CD4-positive, alpha-beta T cell (primary cell): ENCODE measurements at regions of chr4 and their contacts with region 1.

Region 1: DNA sequence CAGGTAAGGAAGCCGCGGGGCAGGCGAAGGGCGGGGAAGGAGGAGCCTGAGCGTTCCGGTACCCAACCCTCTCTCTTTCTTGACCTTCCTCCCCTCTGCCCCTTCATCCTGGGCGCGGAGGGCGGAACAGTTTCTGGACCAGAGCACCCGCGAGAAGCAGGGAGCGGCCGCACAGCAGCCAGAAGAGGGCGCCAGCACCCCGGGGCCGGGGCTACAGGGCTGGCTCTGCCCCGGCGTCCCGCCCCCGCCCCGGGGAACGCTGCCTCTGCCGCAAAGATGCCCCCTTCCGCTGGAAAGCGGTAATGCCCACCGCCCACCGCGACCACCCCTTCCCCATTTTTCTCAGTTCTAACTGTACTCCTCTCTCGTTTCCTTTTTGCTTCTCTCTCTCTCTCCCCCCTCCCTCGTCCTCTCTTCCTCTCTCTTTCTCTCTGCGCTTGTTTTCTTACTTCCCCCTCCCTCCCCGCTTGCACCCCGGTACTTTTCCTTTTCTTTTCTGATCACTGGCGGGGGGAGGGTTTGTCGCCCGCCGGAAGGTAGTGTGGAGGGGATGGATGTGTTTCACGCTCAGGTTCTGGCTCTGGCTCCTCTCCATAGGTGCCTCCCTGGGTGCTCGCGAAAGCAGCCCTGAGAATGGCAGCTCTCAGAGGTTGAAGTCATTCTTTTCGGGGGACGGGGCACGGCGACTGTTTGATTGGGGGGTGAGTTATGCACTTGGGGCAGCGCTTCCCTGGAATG is 13.1 kb upstream of the PRDM8 start:
- DNase-seq: peak; percentile 82 to 97 (median 92)
- ATAC-seq: peak; percentile 88
- H3K4me3 ChIP-seq: peak overlapping the region; percentile 88
- H3K4me3 Mint-ChIP-seq: peak overlapping the region; percentile 100
- H3K27ac ChIP-seq: peak overlapping the region; percentile 77 to 85
- H3K27ac Mint-ChIP-seq: peak overlapping the region; percentile 94
- H3K4me1 ChIP-seq: peaks cover 41% of the 10 kb centered on the region
- H3K4me1 Mint-ChIP-seq: peaks cover 59% of the 10 kb centered on the region
- H3K27me3 ChIP-seq: no peaks in the 10 kb centered on the region
- H3K27me3 Mint-ChIP-seq: no peaks in the 10 kb centered on the region
- CTCF ChIP-seq: peak; percentile 96

Region 2: DNA sequence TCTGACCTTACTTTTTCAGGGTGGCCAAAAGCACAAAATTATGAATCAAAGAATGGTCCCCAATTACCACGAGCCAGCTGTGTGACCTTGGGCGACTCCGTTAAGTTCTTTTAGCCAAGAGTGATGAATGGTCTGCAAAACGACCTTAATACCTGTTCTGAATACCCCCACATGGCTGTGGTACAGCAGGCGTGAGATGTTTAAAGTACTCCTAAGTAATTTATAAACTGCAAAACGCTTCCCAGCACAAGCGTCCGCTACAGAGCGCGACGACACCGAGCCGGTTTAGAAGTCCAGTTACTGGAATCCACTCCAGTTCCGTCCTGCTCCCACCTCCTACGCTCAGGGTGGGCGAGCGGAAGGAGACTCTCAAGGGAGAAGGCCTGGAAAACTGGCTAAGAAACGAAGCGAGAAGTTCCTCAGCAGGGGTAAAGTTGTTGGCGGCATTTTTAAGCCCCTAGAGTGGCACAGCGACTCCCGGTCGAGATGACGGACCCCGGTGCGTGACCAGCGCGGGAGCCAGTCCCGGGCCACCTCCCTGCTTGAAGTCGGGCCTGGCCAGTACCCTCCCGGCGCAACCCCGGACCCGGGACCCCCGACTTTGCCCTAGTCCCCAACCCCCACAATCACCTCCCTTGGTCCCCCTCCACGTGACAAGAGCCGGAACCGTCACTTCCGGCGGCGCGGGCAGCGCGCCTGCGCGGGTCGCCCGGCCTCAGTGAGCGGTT is 1408.8 kb before region 1 on chr4:
- CTCF ChIA-PET with region 1: no interaction called
- POLR2A ChIA-PET with region 1: no interaction called
- intact Hi-C with region 1: loop called in 1 of 2 experiments (anchors 10 kb)
- DNase-seq: peak; percentile 74 to 93 (median 85)
- ATAC-seq: peak; percentile 61
- H3K4me3 ChIP-seq: peak overlapping the region; percentile 94
- H3K4me3 Mint-ChIP-seq: peak overlapping the region; percentile 96
- H3K27ac ChIP-seq: peak overlapping the region; percentile 72 to 87
- H3K27ac Mint-ChIP-seq: peak overlapping the region; percentile 90
- H3K4me1 ChIP-seq: peaks cover 15% of the 10 kb centered on the region
- H3K4me1 Mint-ChIP-seq: peaks cover 20% of the 10 kb centered on the region
- H3K27me3 ChIP-seq: no peaks in the 10 kb centered on the region
- H3K27me3 Mint-ChIP-seq: no peaks in the 10 kb centered on the region
- CTCF ChIP-seq: no peak

Region 3: GRCh38 chr4:79935274-79935673 is 248.9 kb before region 1 on chr4:
- CTCF ChIA-PET with region 1: no interaction called
- POLR2A ChIA-PET with region 1: no interaction called
- intact Hi-C with region 1: no loop called
- DNase-seq: no peak
- ATAC-seq: no peak
- H3K4me3 ChIP-seq: no peak overlapping the region
- H3K4me3 Mint-ChIP-seq: no peak overlapping the region
- H3K27ac ChIP-seq: no peak overlapping the region
- H3K27ac Mint-ChIP-seq: no peak overlapping the region
- H3K4me1 ChIP-seq: no peaks in the 10 kb centered on the region
- H3K4me1 Mint-ChIP-seq: no peaks in the 10 kb centered on the region
- H3K27me3 ChIP-seq: no peaks in the 10 kb centered on the region
- H3K27me3 Mint-ChIP-seq: no peaks in the 10 kb centered on the region
- CTCF ChIP-seq: no peak

Region 4: GRCh38 chr4:80072744-80073472 is 111.3 kb before region 1 on chr4 and contains the start of gene ANTXR2:
- CTCF ChIA-PET with region 1: interaction called, 9 read pairs
- POLR2A ChIA-PET with region 1: interaction called, 26 read pairs
- intact Hi-C with region 1: loop called in 1 of 2 experiments (anchors 5 kb)
- DNase-seq: peak; percentile 37 to 88 (median 67)
- ATAC-seq: peak; percentile 80
- H3K4me3 ChIP-seq: peak within 1 kb of the TSS; percentile 90
- H3K4me3 Mint-ChIP-seq: peak within 1 kb of the TSS; percentile 99
- H3K27ac ChIP-seq: peak within 1 kb of the TSS; percentile 78 to 82
- H3K27ac Mint-ChIP-seq: peak within 1 kb of the TSS; percentile 95
- H3K4me1 ChIP-seq: peaks cover 22% of the 10 kb centered on the region
- H3K4me1 Mint-ChIP-seq: peaks cover 79% of the 10 kb centered on the region
- H3K27me3 ChIP-seq: no peaks in the 10 kb centered on the region
- H3K27me3 Mint-ChIP-seq: no peaks in the 10 kb centered on the region
- CTCF ChIP-seq: no peak
- total RNA-seq, gene ANTXR2: 15.3 to 16.7 TPM

Region 5: GRCh38 chr4:80138551-80139538 is 45.4 kb before region 1 on chr4:
- CTCF ChIA-PET with region 1: interaction called, 28 read pairs
- POLR2A ChIA-PET with region 1: interaction called, 34 read pairs
- intact Hi-C with region 1: no loop called
- DNase-seq: peak; percentile 30 to 85 (median 56)
- ATAC-seq: peak; percentile 98
- H3K4me3 ChIP-seq: no peak overlapping the region
- H3K4me3 Mint-ChIP-seq: peak overlapping the region; percentile 3
- H3K27ac ChIP-seq: peak overlapping the region; percentile 38 to 63
- H3K27ac Mint-ChIP-seq: peak overlapping the region; percentile 73
- H3K4me1 ChIP-seq: peaks cover 15% of the 10 kb centered on the region
- H3K4me1 Mint-ChIP-seq: peaks cover 58% of the 10 kb centered on the region
- H3K27me3 ChIP-seq: no peaks in the 10 kb centered on the region
- H3K27me3 Mint-ChIP-seq: no peaks in the 10 kb centered on the region
- CTCF ChIP-seq: no peak

Region 6: GRCh38 chr4:80196922-80197573 is 12.8 kb after region 1 on chr4 and contains the start of gene PRDM8:
- CTCF ChIA-PET with region 1: interaction called, 15 read pairs
- POLR2A ChIA-PET with region 1: interaction called, 61 read pairs
- intact Hi-C with region 1: loop called (anchors 2 kb)
- DNase-seq: peak in 8 of 14 experiments; percentile 23 to 74 (median 40)
- ATAC-seq: peak; percentile 64
- H3K4me3 ChIP-seq: peak within 1 kb of the TSS; percentile 53
- H3K4me3 Mint-ChIP-seq: peak within 1 kb of the TSS; percentile 76
- H3K27ac ChIP-seq: no peak within 1 kb of the TSS
- H3K27ac Mint-ChIP-seq: peak within 1 kb of the TSS; percentile 2
- H3K4me1 ChIP-seq: peaks cover 32% of the 10 kb centered on the region
- H3K4me1 Mint-ChIP-seq: peaks cover 37% of the 10 kb centered on the region
- H3K27me3 ChIP-seq: peaks cover 7 to 13% of the 10 kb centered on the region in 2 experiments
- H3K27me3 Mint-ChIP-seq: peaks cover 54% of the 10 kb centered on the region
- CTCF ChIP-seq: no peak
- total RNA-seq, gene PRDM8: 4.2 to 5.1 TPM

Region 7: GRCh38 chr4:80215449-80216052 is 31.3 kb after region 1 on chr4:
- CTCF ChIA-PET with region 1: interaction called, 3 read pairs
- POLR2A ChIA-PET with region 1: interaction called, 4 read pairs
- intact Hi-C with region 1: loop called in 1 of 2 experiments (anchors 5 kb)
- DNase-seq: peak in 3 of 14 experiments; percentile 50 to 59 (median 51)
- ATAC-seq: no peak
- H3K4me3 ChIP-seq: no peak overlapping the region
- H3K4me3 Mint-ChIP-seq: no peak overlapping the region
- H3K27ac ChIP-seq: no peak overlapping the region
- H3K27ac Mint-ChIP-seq: no peak overlapping the region
- H3K4me1 ChIP-seq: no peaks in the 10 kb centered on the region
- H3K4me1 Mint-ChIP-seq: no peaks in the 10 kb centered on the region
- H3K27me3 ChIP-seq: peaks cover 3 to 30% of the 10 kb centered on the region in 2 experiments
- H3K27me3 Mint-ChIP-seq: peaks cover 38% of the 10 kb centered on the region
- CTCF ChIP-seq: peak; percentile 92

Region 8: GRCh38 chr4:80271801-80272200 is 87.6 kb after region 1 on chr4:
- CTCF ChIA-PET with region 1: no interaction called
- POLR2A ChIA-PET with region 1: no interaction called
- intact Hi-C with region 1: no loop called
- DNase-seq: no peak
- ATAC-seq: no peak
- H3K4me3 ChIP-seq: no peak overlapping the region
- H3K4me3 Mint-ChIP-seq: no peak overlapping the region
- H3K27ac ChIP-seq: no peak overlapping the region
- H3K27ac Mint-ChIP-seq: no peak overlapping the region
- H3K4me1 ChIP-seq: peaks cover 7% of the 10 kb centered on the region
- H3K4me1 Mint-ChIP-seq: peaks cover 16% of the 10 kb centered on the region
- H3K27me3 ChIP-seq: peaks cover 22 to 47% of the 10 kb centered on the region in 2 experiments
- H3K27me3 Mint-ChIP-seq: peaks cover 59% of the 10 kb centered on the region
- CTCF ChIP-seq: no peak